ENCODE measurements at regions of chr1 and their contacts with region 1.

Region 1: DNA sequence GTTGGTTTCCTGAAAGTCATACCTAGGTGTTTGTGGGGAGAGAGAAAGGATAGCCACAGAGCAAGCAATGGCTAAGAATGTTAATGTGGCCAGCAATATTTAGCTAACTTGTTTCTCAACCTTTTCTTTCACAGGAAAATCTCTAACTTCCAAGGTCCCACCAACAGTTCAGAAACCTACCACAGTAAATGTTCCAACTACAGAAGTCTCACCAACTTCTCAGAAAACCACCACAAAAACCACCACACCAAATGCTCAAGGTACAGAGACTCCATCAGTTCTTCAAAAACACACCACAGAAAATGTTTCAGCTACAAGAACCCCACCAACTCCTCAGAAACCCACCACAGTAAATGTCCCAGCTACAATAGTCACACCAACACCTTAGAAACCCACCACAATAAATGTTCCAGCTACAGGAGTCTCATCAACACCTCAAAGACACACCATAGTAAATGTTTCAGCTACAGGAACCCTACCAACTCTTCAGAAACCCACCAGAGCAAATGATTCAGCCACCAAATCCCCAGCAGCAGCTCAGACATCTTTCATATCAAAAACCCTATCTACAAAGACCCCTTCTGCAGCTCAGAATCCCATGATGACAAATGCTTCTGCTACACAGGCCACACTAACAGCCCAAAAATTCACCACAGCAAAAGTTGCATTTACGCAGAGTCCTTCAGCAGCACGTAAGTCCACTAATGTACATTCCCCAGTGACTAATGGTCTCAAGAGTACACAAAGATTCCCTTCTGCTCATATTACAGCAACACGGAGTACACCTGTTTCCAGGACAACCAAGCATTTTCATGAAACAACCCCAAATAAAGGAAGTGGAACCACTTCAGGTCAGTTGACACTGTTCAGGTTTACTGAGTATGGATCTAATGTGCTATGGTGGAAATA is 15.3 kb downstream of the CD55 start:
- DNase-seq: peak in 22 of 35 experiments; percentile 12 to 75 (median 36)
- ATAC-seq: peak; percentile 62 to 76 (median 70)
- H3K4me3 ChIP-seq: no peak overlapping the region
- H3K4me3 Mint-ChIP-seq: peak overlapping the region; percentile 13 to 57 (median 53)
- H3K27ac ChIP-seq: peak overlapping the region; percentile 75
- H3K27ac Mint-ChIP-seq: peak overlapping the region; percentile 84 to 88
- H3K4me1 ChIP-seq: peaks cover 12 to 29% of the 10 kb centered on the region in 2 experiments
- H3K4me1 Mint-ChIP-seq: peaks cover 71 to 76% (median 74%) of the 10 kb centered on the region in 3 donors
- H3K27me3 ChIP-seq: no peaks in the 10 kb centered on the region
- H3K27me3 Mint-ChIP-seq: no peaks in the 10 kb centered on the region

Region 2: GRCh38 chr1:205775015-205775716 is 1561.6 kb before region 1 on chr1 and contains the start of gene RAB29:
- CTCF ChIA-PET with region 1: no interaction called
- POLR2A ChIA-PET with region 1: interaction called in 1 of 2 experiments, 10 read pairs
- DNase-seq: peak; percentile 61 to 93 (median 85)
- ATAC-seq: peak; percentile 91 to 94 (median 92)
- H3K4me3 ChIP-seq: peak within 1 kb of the TSS; percentile 74 to 80
- H3K4me3 Mint-ChIP-seq: peak within 1 kb of the TSS; percentile 84 to 92 (median 85)
- H3K27ac ChIP-seq: peak within 1 kb of the TSS; percentile 93
- H3K27ac Mint-ChIP-seq: peak within 1 kb of the TSS; percentile 95 to 97
- H3K4me1 ChIP-seq: peaks cover 6 to 43% of the 10 kb centered on the region in 2 experiments
- H3K4me1 Mint-ChIP-seq: peaks cover 47 to 66% (median 64%) of the 10 kb centered on the region in 3 donors
- H3K27me3 ChIP-seq: no peaks in the 10 kb centered on the region
- H3K27me3 Mint-ChIP-seq: no peaks in the 10 kb centered on the region
- total RNA-seq, gene RAB29: 32.5 to 64.6 (median 46.8) TPM

Region 3: GRCh38 chr1:207032528-207033017 is 304.2 kb before region 1 on chr1 and contains the start of gene C1orf116:
- CTCF ChIA-PET with region 1: no interaction called
- POLR2A ChIA-PET with region 1: no interaction called
- DNase-seq: no peak
- ATAC-seq: no peak
- H3K4me3 ChIP-seq: no peak within 1 kb of the TSS
- H3K4me3 Mint-ChIP-seq: no peak within 1 kb of the TSS
- H3K27ac ChIP-seq: no peak within 1 kb of the TSS
- H3K27ac Mint-ChIP-seq: no peak within 1 kb of the TSS
- H3K4me1 ChIP-seq: no peaks in the 10 kb centered on the region
- H3K4me1 Mint-ChIP-seq: no peaks in the 10 kb centered on the region
- H3K27me3 ChIP-seq: peaks cover 0 to 17% of the 10 kb centered on the region in 2 experiments
- H3K27me3 Mint-ChIP-seq: peaks cover 23 to 38% of the 10 kb centered on the region in 2 donors
- total RNA-seq, gene C1orf116: 0.08 to 0.29 (median 0.14) TPM

Region 4: DNA sequence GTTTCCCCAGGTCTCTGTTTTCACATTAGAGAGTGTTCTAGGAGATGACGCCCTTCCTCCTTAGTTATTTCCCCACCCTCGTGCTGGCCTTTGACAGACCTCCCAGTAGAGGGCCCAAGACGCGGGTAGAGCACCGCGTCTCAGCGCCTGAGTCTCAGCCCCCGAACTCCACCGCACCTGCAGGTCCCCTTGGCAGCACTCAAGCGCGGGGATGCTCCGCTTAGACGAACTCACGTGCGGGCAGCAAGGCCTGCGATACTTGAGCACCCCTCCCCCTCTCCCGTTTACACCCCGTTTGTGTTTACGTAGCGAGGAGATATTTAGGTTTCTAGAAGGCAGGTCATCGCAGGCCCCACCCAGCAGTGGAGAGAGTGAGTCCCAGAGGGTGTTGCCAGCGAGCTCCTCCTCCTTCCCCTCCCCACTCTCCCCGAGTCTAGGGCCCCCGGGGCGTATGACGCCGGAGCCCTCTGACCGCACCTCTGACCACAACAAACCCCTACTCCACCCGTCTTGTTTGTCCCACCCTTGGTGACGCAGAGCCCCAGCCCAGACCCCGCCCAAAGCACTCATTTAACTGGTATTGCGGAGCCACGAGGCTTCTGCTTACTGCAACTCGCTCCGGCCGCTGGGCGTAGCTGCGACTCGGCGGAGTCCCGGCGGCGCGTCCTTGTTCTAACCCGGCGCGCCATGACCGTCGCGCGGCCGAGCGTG is 15.6 kb before region 1 on chr1 and contains the start of gene CD55:
- CTCF ChIA-PET with region 1: interaction called in 1 of 2 experiments, 36 read pairs
- POLR2A ChIA-PET with region 1: interaction called, 11 to 111 read pairs
- DNase-seq: peak; percentile 93 to 100 (median 100)
- ATAC-seq: peak; percentile 89 to 93 (median 92)
- H3K4me3 ChIP-seq: peak within 1 kb of the TSS; percentile 61 to 99
- H3K4me3 Mint-ChIP-seq: peak within 1 kb of the TSS; percentile 89 to 95 (median 94)
- H3K27ac ChIP-seq: peak within 1 kb of the TSS; percentile 97
- H3K27ac Mint-ChIP-seq: peak within 1 kb of the TSS; percentile 99 to 100
- H3K4me1 ChIP-seq: peaks cover 18 to 20% of the 10 kb centered on the region in 2 experiments
- H3K4me1 Mint-ChIP-seq: peaks cover 31 to 49% (median 48%) of the 10 kb centered on the region in 3 donors
- H3K27me3 ChIP-seq: peaks cover 0 to 3% of the 10 kb centered on the region in 2 experiments
- H3K27me3 Mint-ChIP-seq: no peaks in the 10 kb centered on the region
- total RNA-seq, gene CD55: 86.2 to 218 (median 117) TPM

Region 5: DNA sequence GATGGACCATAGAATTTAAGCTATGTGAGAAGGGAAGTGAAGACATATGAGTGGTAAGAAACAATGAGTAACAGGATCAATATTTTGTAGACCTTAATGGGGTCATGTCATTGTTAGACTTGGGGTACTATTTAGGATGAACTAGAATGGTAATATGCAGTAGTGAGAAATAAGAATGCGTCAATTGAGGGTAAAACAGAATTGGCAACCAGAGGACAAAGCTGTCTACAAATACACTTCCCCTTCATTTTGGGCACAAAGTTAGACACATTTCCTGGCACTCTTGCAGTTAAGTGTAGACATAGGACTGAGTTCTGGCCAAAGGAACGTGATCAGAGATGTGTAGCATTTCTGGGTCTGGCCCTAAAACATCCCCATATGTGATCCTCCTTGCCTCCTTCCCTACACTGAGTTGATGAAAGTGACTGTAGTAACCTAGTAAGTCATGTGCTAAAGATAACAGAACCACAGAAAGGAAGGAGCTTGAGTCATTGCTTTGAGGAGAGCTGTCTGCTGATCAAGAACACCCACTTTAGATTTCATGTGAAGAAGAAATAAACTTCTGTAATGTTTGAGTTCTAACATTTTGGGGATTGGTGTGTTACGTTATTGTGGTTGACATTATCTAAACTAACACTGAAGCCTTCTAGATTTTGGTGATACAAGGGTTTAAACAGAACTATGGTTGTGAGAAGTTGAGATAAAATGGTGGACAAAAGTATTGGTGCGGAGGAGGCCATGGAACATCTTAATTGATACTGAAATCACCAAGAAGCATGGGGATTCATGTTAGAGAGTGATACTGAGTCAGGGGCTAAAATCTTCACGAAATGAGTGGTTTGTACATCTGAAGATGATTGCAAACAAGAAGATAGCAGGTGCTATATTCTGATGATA is 26.4 kb after region 1 on chr1:
- CTCF ChIA-PET with region 1: interaction called in 1 of 2 experiments, 3 read pairs
- POLR2A ChIA-PET with region 1: interaction called, 3 to 10 read pairs
- DNase-seq: peak in 3 of 35 experiments; percentile 5 to 57 (median 6)
- ATAC-seq: peak; percentile 92 to 98 (median 94)
- H3K4me3 ChIP-seq: no peak overlapping the region
- H3K4me3 Mint-ChIP-seq: no peak overlapping the region
- H3K27ac ChIP-seq: no peak overlapping the region
- H3K27ac Mint-ChIP-seq: no peak overlapping the region
- H3K4me1 ChIP-seq: peaks cover 0 to 7% of the 10 kb centered on the region in 2 experiments
- H3K4me1 Mint-ChIP-seq: peaks cover 0 to 8% (median 2%) of the 10 kb centered on the region in 3 donors
- H3K27me3 ChIP-seq: no peaks in the 10 kb centered on the region
- H3K27me3 Mint-ChIP-seq: no peaks in the 10 kb centered on the region